ENCODE measurements at regions of chr9 and their contacts with region 1.

Region 1: GRCh38 chr9:128771745-128772519 is at the start of gene ZER1:
- DNase-seq: peak; percentile 56 to 95
- H3K4me3 ChIP-seq: peak within 1 kb of the TSS; percentile 84 to 85
- H3K27ac ChIP-seq: peak within 1 kb of the TSS; percentile 88 to 95
- H3K4me1 ChIP-seq: peaks cover 0 to 23% of the 10 kb centered on the region in 2 donors
- H3K27me3 ChIP-seq: no peaks in the 10 kb centered on the region
- CTCF ChIP-seq: peak in 1 of 3 experiments; percentile 14
- total RNA-seq, gene ZER1: 55.5 TPM

Region 2: GRCh38 chr9:128702445-128702948 is 69.4 kb before region 1 on chr9 and contains the start of gene PKN3:
- intact Hi-C with region 1: loop called (anchors 1 kb)
- DNase-seq: peak in 1 of 2 donors; percentile 90
- H3K4me3 ChIP-seq: peak within 1 kb of the TSS; percentile 82 to 94
- H3K27ac ChIP-seq: peak within 1 kb of the TSS; percentile 49 to 73
- H3K4me1 ChIP-seq: peaks cover 0 to 8% of the 10 kb centered on the region in 2 donors
- H3K27me3 ChIP-seq: no peaks in the 10 kb centered on the region
- CTCF ChIP-seq: peak; percentile 86 to 90 (median 87)
- total RNA-seq, gene PKN3: 28.8 TPM

Region 3: DNA sequence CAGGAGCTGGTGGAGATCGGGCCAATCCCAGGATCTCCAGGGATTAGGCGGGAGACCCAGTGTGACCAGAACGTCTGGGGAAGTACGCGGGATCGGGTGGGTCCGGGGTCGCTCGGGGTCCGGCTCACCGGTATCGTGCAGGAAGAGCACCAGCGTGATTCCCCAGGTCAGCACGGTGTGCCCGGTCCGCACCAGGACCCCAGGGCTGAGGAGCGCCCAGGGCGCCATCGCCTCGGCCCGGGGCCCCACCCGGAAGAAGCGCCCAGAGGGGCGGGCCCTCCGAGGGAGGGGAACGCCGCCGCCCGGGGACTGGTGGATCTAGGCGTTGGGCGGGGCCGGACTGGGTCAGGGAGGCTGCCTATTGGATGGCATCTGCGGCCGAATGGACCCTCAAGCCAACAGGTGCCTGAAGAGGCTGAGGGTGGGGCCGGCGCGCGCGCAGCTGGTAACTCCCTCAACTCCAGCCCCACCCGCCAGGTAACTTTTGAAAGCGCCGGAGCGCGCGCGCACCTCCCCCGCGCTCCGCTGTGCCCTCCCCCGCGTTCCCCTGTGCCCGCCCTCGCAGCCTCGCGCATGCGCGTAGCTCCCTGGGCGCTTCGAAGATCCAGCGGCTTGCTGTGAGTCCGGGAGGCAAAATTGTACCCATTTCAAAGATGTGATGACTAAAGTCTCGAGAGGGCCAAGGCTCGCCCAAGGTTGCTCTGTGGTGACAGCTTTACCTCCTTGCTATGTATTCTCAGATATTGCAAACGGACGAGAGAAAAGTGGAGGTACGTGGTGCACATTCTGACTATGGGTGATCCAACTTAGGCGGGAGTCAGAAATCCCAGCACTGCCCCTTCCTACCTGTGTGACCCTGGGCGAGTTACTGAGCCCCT is 47.8 kb before region 1 on chr9 and contains the start of gene ZDHHC12:
- intact Hi-C with region 1: loop called (anchors 1 kb)
- DNase-seq: peak; percentile 93 to 97
- H3K4me3 ChIP-seq: peak within 1 kb of the TSS; percentile 58 to 70
- H3K27ac ChIP-seq: peak within 1 kb of the TSS; percentile 80 to 82
- H3K4me1 ChIP-seq: no peaks in the 10 kb centered on the region
- H3K27me3 ChIP-seq: no peaks in the 10 kb centered on the region
- CTCF ChIP-seq: no peak
- total RNA-seq, gene ZDHHC12: 49.6 TPM

Region 4: GRCh38 chr9:128786681-128787601 is 15.0 kb after region 1 on chr9 and contains the start of gene TBC1D13:
- intact Hi-C with region 1: loop called (anchors 1 kb)
- DNase-seq: peak; percentile 53 to 93
- H3K4me3 ChIP-seq: peak within 1 kb of the TSS; percentile 59 to 97
- H3K27ac ChIP-seq: peak within 1 kb of the TSS; percentile 78 to 83
- H3K4me1 ChIP-seq: peaks cover 4 to 6% of the 10 kb centered on the region in 2 donors
- H3K27me3 ChIP-seq: no peaks in the 10 kb centered on the region
- CTCF ChIP-seq: no peak
- total RNA-seq, gene TBC1D13: 19.8 TPM

Region 5: GRCh38 chr9:129823935-129824601 is 1052.1 kb after region 1 on chr9 and contains the start of gene TOR1A:
- intact Hi-C with region 1: loop called (anchors 5 kb)
- DNase-seq: peak; percentile 70 to 97
- H3K4me3 ChIP-seq: peak within 1 kb of the TSS; percentile 69 to 98
- H3K27ac ChIP-seq: peak within 1 kb of the TSS; percentile 80 to 81
- H3K4me1 ChIP-seq: peaks cover 0 to 7% of the 10 kb centered on the region in 2 donors
- H3K27me3 ChIP-seq: no peaks in the 10 kb centered on the region
- CTCF ChIP-seq: no peak
- total RNA-seq, gene TOR1A: 67.7 TPM

Measured in ascending aorta (tissue), 2 donors.